ENCODE measurements at regions of chr22 and their contacts with region 1.

Region 1: DNA sequence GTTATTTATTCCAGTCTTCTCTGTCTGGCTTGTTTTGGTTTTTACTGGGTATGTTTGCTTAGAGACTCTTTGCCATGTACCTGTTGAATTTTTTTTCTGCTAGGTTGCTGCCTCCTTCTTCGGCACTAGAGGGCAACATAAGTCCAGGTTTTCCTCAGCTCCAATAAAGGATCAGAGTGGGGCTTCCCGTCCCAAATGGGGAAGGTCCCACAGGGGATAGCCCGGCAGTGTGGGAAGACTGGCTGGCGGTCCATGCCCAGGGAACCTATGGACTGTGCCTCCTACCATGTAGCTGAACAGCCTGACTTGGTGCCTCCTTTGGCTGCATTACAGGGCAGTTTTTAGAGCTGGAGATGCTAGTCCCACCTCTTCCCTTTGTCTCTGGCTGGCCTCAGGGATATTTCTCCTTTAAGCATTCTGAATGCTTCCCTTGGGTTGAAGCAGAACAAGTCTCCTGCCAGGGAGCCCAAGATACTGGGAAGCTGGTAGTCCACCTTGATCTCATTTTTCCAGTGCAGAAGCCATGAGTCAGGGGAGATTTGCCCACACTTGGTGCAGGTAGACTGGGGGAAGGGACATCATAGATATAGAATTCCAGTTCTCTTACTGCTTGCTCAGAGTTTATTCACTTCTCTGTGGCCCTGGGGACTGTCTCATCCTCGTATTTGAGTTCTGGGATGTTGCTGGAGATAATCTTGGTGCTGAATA is 60.2 kb downstream of the BRD1 start:
- DNase-seq: no peak
- ATAC-seq: no peak

Region 2: GRCh38 chr22:49917974-49918910 is 150.7 kb after region 1 on chr22 and contains the starts of genes ALG12 and CRELD2:
- intact Hi-C with region 1: loop called (anchors 5 kb)
- DNase-seq: peak; percentile 99
- ATAC-seq: peak; percentile 99
- total RNA-seq, gene ALG12: 16.4 TPM
- total RNA-seq, gene CRELD2: 30.6 TPM

Region 3: DNA sequence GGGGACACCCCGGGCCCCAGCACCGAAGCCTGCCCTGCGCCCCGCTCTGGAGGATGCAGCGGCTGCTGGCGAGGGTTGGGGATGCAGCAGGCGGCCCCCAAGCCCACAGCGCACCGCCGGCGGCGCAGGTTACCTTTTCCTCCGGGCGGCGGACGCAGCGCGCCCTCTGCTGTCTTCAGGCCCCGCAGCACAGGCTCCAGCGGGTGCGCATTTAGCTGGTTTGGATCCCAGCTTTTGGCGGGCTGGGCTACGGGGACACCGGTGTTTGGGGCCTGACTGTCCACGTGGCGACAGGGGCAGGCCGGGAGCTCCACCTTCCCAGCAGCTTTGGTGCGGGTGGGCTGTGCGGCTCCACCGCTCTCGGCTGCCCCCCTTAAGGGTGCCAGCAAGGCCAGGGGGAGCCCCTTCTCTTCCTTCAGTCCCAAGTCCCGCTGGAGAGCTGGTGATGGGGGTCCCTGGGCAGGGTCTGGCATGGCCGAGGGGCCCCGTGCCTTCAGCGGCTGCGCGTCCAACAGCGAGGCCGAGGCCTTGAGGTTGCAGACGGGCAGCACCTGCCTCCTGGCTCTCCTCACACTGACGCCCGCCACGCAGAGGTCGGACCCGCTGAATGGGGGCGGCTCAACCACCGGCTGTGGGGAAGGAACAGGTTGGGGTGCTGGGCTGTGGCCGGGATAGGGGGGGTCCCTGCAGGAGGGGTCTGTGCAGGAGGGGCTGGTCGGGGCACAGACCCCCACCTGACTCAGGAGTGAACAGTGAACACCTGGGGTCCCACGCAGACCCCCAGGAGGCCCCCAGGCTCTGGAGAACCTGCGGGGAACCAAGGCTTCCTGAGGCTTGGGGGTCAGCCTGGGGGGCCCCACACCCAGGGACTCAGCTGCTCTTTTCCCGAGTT is 263.0 kb after region 1 on chr22:
- intact Hi-C with region 1: loop called (anchors 10 kb)
- DNase-seq: peak; percentile 90
- ATAC-seq: peak; percentile 83